Heart left ventricle (tissue), 16 donors: ENCODE measurements at regions of chr16 and their contacts with region 1.

Region 1: GRCh38 chr16:9929313-9929712 is 252.9 kb downstream of the GRIN2A start:
- DNase-seq: no peak
- ATAC-seq: no peak
- H3K4me3 ChIP-seq: no peak overlapping the region
- H3K27ac ChIP-seq: no peak overlapping the region
- H3K4me1 ChIP-seq: peaks cover 0 to 17% (median 6%) of the 10 kb centered on the region in 12 donors
- H3K27me3 ChIP-seq: no peaks in the 10 kb centered on the region
- CTCF ChIP-seq: no peak
- POLR2A ChIP-seq: no peak

Region 2: DNA sequence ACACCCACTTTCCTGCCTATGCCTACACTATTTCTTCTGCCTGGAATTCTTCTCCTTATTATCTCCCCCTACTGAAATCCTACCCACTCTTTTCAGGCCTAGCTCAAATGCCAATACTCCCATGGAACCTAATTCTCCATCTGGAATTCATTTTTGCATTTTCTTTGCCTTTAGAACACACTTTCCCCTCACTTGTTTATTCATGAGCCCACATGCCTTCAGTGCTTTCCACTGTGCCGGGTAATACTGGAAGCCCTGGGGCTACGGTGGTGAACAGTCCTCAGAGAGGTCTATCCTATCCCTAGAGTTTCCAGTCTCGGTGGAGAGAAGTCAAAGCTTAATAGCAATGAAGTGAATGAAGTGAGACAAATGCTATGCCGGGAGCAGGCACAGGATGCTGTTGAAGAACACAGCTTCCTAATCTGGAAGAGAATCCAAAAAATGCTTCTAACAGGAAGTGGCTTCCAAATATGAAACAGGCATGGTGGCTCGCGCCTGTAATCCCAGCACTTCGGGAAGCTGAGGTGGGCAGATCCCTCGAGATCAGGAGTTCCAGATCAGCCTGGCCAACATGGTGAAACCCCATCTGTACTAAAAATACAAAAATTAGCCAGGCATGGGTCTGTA is 69.5 kb before region 1 on chr16:
- intact Hi-C with region 1: loop called in 1 of 10 experiments (anchors 10 kb)
- DNase-seq: no peak
- ATAC-seq: no peak
- H3K4me3 ChIP-seq: no peak overlapping the region
- H3K27ac ChIP-seq: no peak overlapping the region
- H3K4me1 ChIP-seq: peaks cover 0 to 10% (median 3%) of the 10 kb centered on the region in 12 donors
- H3K27me3 ChIP-seq: no peaks in the 10 kb centered on the region
- CTCF ChIP-seq: no peak
- POLR2A ChIP-seq: no peak